ENCODE measurements at regions of chr1 and their contacts with region 1.

Region 1: GRCh38 chr1:198220428-198220827 is 63.6 kb downstream of the NEK7 start:
- DNase-seq: peak; percentile 98
- H3K4me3 ChIP-seq: no peak overlapping the region
- H3K27ac ChIP-seq: peak overlapping the region; percentile 75
- H3K4me1 ChIP-seq: peaks cover 15% of the 10 kb centered on the region
- H3K27me3 ChIP-seq: no peaks in the 10 kb centered on the region
- CTCF ChIP-seq: no peak
- POLR2A ChIP-seq: peak; percentile 60

Region 2: GRCh38 chr1:198143797-198144196 is 76.6 kb before region 1 on chr1:
- CTCF ChIA-PET with region 1: no interaction called
- POLR2A ChIA-PET with region 1: no interaction called
- dilution Hi-C with region 1: no loop called
- intact Hi-C with region 1: no loop called
- DNase-seq: no peak
- H3K4me3 ChIP-seq: no peak overlapping the region
- H3K27ac ChIP-seq: no peak overlapping the region
- H3K4me1 ChIP-seq: no peaks in the 10 kb centered on the region
- H3K27me3 ChIP-seq: no peaks in the 10 kb centered on the region
- CTCF ChIP-seq: no peak
- POLR2A ChIP-seq: no peak

Region 3: DNA sequence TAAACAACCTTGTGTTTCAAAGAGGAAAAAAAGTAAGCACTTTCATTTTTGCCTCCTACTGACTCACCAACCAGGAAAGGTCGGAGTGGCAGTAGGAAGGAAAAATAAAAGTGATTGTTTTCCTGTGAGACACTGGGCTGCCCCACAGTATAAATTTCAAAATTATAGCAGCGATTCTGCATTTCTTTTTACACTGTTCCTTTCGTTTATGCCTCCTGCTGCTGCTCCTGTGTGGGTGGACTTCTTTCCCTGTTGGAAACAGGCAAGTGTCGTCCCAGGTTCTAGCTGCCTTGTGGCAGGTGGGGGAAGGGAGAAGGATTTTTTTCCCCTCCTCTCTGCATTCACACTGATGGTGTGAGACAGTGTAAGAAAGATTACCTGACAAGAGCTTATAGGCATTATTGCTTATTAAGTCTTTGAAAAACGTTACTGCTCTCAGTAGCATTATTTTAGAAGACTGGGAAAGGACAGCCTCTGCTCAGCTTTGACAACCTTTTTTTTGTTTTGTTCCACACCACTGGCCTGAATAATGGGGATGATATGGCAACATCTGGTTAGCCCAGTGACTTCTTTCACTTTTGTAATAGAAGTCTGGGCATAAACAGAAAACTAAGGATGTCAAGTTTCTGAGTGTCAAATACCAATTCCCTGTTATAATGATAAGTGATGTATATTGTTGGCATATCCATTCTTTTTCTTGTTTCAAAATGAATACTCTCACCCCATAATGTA is 14.3 kb after region 1 on chr1:
- CTCF ChIA-PET with region 1: interaction called, 4 read pairs
- POLR2A ChIA-PET with region 1: no interaction called
- dilution Hi-C with region 1: no loop called
- intact Hi-C with region 1: loop called (anchors 1 kb)
- DNase-seq: peak; percentile 66
- H3K4me3 ChIP-seq: peak overlapping the region in 2 of 3 experiments; percentile 19 to 77
- H3K27ac ChIP-seq: no peak overlapping the region
- H3K4me1 ChIP-seq: peaks cover 15% of the 10 kb centered on the region
- H3K27me3 ChIP-seq: no peaks in the 10 kb centered on the region
- CTCF ChIP-seq: no peak
- POLR2A ChIP-seq: no peak

Region 4: GRCh38 chr1:198253668-198254067 is 33.2 kb after region 1 on chr1:
- CTCF ChIA-PET with region 1: no interaction called
- POLR2A ChIA-PET with region 1: no interaction called
- dilution Hi-C with region 1: no loop called
- intact Hi-C with region 1: loop called (anchors 2 kb)
- DNase-seq: peak; percentile 47
- H3K4me3 ChIP-seq: no peak overlapping the region
- H3K27ac ChIP-seq: no peak overlapping the region
- H3K4me1 ChIP-seq: peaks cover 12% of the 10 kb centered on the region
- H3K27me3 ChIP-seq: no peaks in the 10 kb centered on the region
- CTCF ChIP-seq: no peak
- POLR2A ChIP-seq: no peak

Region 5: GRCh38 chr1:198265073-198265661 is 44.7 kb after region 1 on chr1:
- CTCF ChIA-PET with region 1: interaction called, 5 read pairs
- POLR2A ChIA-PET with region 1: interaction called, 3 read pairs
- dilution Hi-C with region 1: no loop called
- intact Hi-C with region 1: loop called (anchors 1 kb)
- DNase-seq: peak; percentile 61
- H3K4me3 ChIP-seq: no peak overlapping the region
- H3K27ac ChIP-seq: no peak overlapping the region
- H3K4me1 ChIP-seq: peaks cover 42% of the 10 kb centered on the region
- H3K27me3 ChIP-seq: no peaks in the 10 kb centered on the region
- CTCF ChIP-seq: no peak
- POLR2A ChIP-seq: no peak

Region 6: GRCh38 chr1:198391393-198392046 is 171.1 kb after region 1 on chr1:
- CTCF ChIA-PET with region 1: no interaction called
- POLR2A ChIA-PET with region 1: no interaction called
- dilution Hi-C with region 1: no loop called
- intact Hi-C with region 1: no loop called
- DNase-seq: no peak
- H3K4me3 ChIP-seq: no peak overlapping the region
- H3K27ac ChIP-seq: no peak overlapping the region
- H3K4me1 ChIP-seq: no peaks in the 10 kb centered on the region
- H3K27me3 ChIP-seq: no peaks in the 10 kb centered on the region
- CTCF ChIP-seq: no peak
- POLR2A ChIP-seq: no peak

Region 7: DNA sequence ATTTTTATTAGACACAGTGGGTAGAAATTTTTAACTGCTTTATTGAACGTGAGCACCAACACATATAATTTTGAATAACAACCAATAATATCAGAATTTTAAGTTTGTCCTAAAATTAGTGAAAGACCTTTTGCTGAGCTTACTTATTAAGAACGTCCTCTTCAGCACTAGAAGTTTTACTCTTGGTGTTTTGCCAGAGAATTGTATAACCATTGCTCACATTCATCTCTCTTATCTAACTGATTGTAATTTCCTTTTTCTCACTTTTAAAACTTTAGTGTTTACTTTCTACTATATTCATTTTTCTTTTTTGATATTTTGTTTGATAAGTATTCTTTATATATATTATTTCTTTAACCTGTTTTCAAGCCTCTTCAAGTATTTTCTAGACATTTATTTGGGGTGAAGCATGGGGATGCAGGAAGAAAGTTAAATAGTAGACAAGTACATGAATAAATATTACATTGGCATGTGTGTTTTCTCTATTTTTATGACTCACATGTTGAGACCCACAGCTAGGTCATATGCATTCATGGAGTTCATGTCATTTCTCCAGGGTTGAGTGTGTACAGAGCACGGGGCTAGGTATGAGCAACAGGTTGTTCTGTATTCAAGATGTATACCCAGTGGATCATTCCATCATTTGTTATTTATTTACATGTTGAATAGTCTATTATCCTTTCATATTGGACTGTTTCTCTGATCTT is 229.5 kb after region 1 on chr1:
- CTCF ChIA-PET with region 1: no interaction called
- POLR2A ChIA-PET with region 1: no interaction called
- dilution Hi-C with region 1: no loop called
- intact Hi-C with region 1: loop called (anchors 2 kb)
- DNase-seq: peak; percentile 86
- H3K4me3 ChIP-seq: no peak overlapping the region
- H3K27ac ChIP-seq: peak overlapping the region; percentile 60
- H3K4me1 ChIP-seq: peaks cover 32% of the 10 kb centered on the region
- H3K27me3 ChIP-seq: no peaks in the 10 kb centered on the region
- CTCF ChIP-seq: no peak
- POLR2A ChIP-seq: no peak

Region 8: GRCh38 chr1:198829944-198830343 is 609.5 kb after region 1 on chr1:
- CTCF ChIA-PET with region 1: no interaction called
- POLR2A ChIA-PET with region 1: no interaction called
- dilution Hi-C with region 1: no loop called
- intact Hi-C with region 1: no loop called
- DNase-seq: peak; percentile 66
- H3K4me3 ChIP-seq: no peak overlapping the region
- H3K27ac ChIP-seq: no peak overlapping the region
- H3K4me1 ChIP-seq: peaks cover 13% of the 10 kb centered on the region
- H3K27me3 ChIP-seq: no peaks in the 10 kb centered on the region
- CTCF ChIP-seq: peak in 1 of 2 donors; percentile 25
- POLR2A ChIP-seq: no peak

Measured in endothelial cell of umbilical vein (primary cell).